ENCODE measurements at regions of chr2 and their contacts with region 1.

Region 1: GRCh38 chr2:219229305-219230058 is at the starts of genes ANKZF1 and ATG9A:
- DNase-seq: peak; percentile 100
- H3K4me3 ChIP-seq: peak within 1 kb of the TSS; percentile 79 to 94 (median 92)
- H3K27ac ChIP-seq: peak within 1 kb of the TSS; percentile 93
- H3K4me1 ChIP-seq: peaks cover 17% of the 10 kb centered on the region
- H3K27me3 ChIP-seq: no peaks in the 10 kb centered on the region
- CTCF ChIP-seq: no peak
- total RNA-seq, gene ANKZF1: 29.2 to 52.9 TPM
- total RNA-seq, gene ATG9A: 60.4 to 74.5 TPM

Region 2: GRCh38 chr2:219119422-219120043 is 109.9 kb before region 1 on chr2:
- CTCF ChIA-PET with region 1: no interaction called
- dilution Hi-C with region 1: loop called (anchors 5 kb)
- in situ Hi-C with region 1: no loop called
- intact Hi-C with region 1: no loop called
- DNase-seq: peak; percentile 35
- H3K4me3 ChIP-seq: no peak overlapping the region
- H3K27ac ChIP-seq: no peak overlapping the region
- H3K4me1 ChIP-seq: peaks cover 37% of the 10 kb centered on the region
- H3K27me3 ChIP-seq: no peaks in the 10 kb centered on the region
- CTCF ChIP-seq: peak; percentile 67 to 75

Region 3: DNA sequence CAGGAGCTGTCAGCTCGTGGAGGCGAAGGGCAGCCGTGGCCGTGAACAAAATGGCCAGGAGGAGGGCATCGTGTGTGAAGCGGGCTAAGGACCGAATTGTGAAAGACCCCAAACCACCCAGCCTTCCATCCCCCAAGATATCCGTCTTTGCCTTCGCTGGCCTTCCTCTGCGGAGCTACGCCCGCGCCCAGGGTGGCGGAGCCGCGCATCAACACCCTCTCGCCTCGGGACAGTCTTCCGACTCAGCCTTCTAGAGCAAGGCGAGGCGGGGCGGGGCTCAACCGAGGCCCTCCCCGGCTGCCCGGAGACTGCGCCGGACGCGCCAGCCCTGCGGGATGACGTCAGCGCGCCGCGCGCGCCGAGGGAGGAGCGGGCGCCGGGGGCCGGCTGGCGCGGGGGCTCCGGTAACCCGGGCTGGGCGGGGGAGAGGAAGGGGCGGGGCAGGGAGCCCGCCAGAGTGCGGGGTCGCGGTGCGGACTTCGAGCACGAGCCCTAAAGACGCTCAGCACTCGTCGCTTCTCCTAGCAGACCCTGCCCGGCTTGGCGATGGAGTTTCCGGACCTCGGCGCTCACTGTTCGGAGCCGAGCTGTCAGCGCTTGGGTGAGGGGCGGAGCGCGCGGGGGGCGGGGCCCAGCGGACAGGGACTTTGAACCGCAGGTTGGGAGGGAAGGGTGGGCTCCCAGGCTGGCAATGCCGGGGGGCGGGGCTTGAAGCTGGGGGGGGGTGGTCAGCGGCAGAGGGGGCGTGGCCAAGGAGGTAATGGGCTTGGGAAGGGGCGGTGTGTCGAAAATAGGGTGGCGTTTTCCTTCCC is 22.8 kb before region 1 on chr2 and contains the start of gene ZFAND2B:
- CTCF ChIA-PET with region 1: no interaction called
- dilution Hi-C with region 1: no loop called
- in situ Hi-C with region 1: no loop called
- intact Hi-C with region 1: loop called (anchors 2 kb)
- DNase-seq: peak; percentile 93
- H3K4me3 ChIP-seq: peak within 1 kb of the TSS; percentile 62 to 88 (median 74)
- H3K27ac ChIP-seq: peak within 1 kb of the TSS; percentile 36
- H3K4me1 ChIP-seq: peaks cover 17% of the 10 kb centered on the region
- H3K27me3 ChIP-seq: no peaks in the 10 kb centered on the region
- CTCF ChIP-seq: no peak
- total RNA-seq, gene ZFAND2B: 23.7 to 33.8 TPM

Region 4: DNA sequence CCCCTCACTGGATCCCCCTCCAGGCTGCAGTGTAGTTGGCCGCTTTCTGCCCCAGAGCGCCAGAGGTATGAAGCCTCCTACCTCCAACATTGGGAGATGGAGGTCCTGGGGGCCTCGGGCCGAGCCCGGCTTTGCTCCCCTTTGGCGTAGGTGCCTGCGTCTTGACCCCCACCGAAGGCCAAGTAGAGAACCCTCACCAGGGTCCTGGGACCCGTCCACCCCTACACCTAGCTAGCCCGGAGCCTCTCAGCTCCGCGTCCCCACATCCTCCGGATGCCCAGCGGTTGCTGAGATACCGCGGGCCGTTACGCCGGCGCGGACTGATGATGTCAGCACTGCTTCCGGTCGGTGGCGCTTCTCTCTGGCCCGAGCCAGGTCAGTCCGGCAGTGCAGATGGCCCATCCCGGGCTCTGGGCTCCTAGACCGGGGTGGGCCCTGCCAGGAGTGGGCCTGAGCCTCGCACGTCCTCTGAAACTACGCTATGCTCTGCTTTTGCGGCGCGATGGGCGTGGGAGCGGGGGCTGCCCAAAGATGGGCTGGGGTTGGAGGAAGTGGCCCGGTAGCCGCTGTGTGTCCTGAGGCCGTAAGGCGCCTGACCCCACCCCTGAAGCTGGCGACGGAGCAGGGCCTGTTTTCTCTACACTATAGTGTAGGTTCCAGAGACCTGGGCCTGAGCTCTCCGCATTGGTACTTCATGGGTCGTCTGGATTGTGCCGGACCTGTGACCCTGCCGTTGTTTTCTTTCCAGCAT is 15.8 kb after region 1 on chr2 and contains the starts of genes GLB1L and STK16:
- CTCF ChIA-PET with region 1: no interaction called
- dilution Hi-C with region 1: no loop called
- in situ Hi-C with region 1: no loop called
- intact Hi-C with region 1: loop called (anchors 1 kb)
- DNase-seq: peak; percentile 85
- H3K4me3 ChIP-seq: peak within 1 kb of the TSS; percentile 67 to 98 (median 82)
- H3K27ac ChIP-seq: peak within 1 kb of the TSS; percentile 88
- H3K4me1 ChIP-seq: peaks cover 46% of the 10 kb centered on the region
- H3K27me3 ChIP-seq: no peaks in the 10 kb centered on the region
- CTCF ChIP-seq: no peak
- total RNA-seq, gene GLB1L: 5.5 to 21.8 TPM
- total RNA-seq, gene STK16: 26.9 to 29.8 TPM

Region 5: DNA sequence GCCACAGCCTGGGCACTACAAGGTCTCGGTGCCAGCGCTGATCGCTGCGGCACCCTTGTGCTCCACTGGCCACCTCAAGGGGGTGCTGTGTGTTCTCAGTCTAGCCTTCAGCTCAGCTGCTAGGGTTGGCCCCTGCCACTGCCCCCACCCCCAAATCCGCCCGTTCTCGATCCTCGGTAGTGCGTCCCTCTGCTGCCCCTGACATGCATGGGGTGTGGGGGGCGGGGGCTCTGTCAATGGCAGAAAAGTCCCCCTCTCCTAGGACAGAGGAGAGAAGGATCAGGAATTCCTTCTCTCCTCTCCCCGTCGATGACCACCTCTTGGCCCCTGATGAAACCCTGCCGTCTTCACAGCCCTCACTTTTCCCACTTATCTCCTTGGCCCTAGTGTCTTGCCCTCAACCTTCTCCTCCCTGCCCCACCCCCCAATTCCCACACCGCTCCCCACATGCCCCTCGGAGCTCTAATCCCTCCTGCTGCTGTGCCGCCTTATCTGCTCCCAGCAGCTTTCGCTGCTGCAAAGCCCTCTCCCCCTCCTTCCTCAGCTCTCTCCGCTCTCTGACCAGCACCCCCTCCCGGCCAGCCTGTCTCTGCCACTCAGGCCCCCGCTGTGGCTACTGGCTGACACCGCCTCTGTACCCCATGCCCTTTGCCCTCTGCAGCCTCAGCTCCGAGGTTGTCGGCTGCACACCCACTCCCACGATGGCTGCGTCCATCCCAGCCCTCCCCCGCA is 280.5 kb after region 1 on chr2:
- CTCF ChIA-PET with region 1: no interaction called
- dilution Hi-C with region 1: loop called (anchors 25 kb)
- in situ Hi-C with region 1: no loop called
- intact Hi-C with region 1: no loop called
- DNase-seq: no peak
- H3K4me3 ChIP-seq: no peak overlapping the region
- H3K27ac ChIP-seq: no peak overlapping the region
- H3K4me1 ChIP-seq: no peaks in the 10 kb centered on the region
- H3K27me3 ChIP-seq: peaks cover 5% of the 10 kb centered on the region
- CTCF ChIP-seq: peak; percentile 73 to 81

Measured in mammary epithelial cell (primary cell).